ENCODE measurements at regions of chr12 and their contacts with region 1.

Region 1: GRCh38 chr12:59886131-59886733 is 290.4 kb downstream of the SLC16A7 start:
- DNase-seq: no peak
- H3K4me3 ChIP-seq: no peak overlapping the region
- H3K27ac ChIP-seq: no peak overlapping the region
- H3K4me1 ChIP-seq: no peaks in the 10 kb centered on the region
- H3K27me3 ChIP-seq: no peaks in the 10 kb centered on the region
- CTCF ChIP-seq: no peak
- EP300 ChIP-seq: no peak
- POLR2A ChIP-seq: no peak

Region 2: GRCh38 chr12:57998251-57998650 is 1888.0 kb before region 1 on chr12:
- intact Hi-C with region 1: loop called in 1 of 4 experiments (anchors 5 kb)
- DNase-seq: no peak
- H3K4me3 ChIP-seq: no peak overlapping the region
- H3K27ac ChIP-seq: no peak overlapping the region
- H3K4me1 ChIP-seq: no peaks in the 10 kb centered on the region
- H3K27me3 ChIP-seq: no peaks in the 10 kb centered on the region
- CTCF ChIP-seq: no peak
- EP300 ChIP-seq: no peak
- POLR2A ChIP-seq: no peak